GM12878 (cell line): ENCODE measurements at regions of chr3 and their contacts with region 1.

Region 1: DNA sequence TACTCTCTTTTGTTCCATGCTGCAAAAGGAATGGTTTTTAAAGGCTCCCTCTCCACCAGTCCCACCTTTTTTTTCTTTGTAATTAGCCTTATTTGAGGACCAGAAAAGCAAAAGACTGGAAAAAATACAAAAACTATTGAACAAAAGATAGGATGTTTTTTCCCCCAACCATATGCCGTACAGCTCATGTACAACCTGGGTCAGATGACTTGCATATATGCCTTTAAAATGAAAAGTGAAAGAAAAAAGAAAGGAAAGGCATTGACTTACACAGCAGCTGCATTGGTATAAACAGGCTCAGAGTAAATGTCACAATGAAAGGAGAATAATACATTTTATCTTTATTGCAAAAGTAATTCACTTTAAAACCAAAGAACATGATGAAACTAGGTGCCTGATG is 69.5 kb upstream of the CMC1 start:
- DNase-seq: no peak
- ATAC-seq: peak; percentile 96
- H3K4me3 ChIP-seq: no peak overlapping the region
- H3K27ac ChIP-seq: no peak overlapping the region
- H3K4me1 ChIP-seq: no peaks in the 10 kb centered on the region
- H3K27me3 ChIP-seq: no peaks in the 10 kb centered on the region
- CTCF ChIP-seq: no peak
- EP300 ChIP-seq: 0 out of 4 replicates have a peak, but pooled peaks of 1 of the 2 experiments have one; percentile 15
- POLR2A ChIP-seq: no peak
- RAD21 ChIP-seq: no peak

Region 2: GRCh38 chr3:28008235-28008634 is 163.7 kb before region 1 on chr3:
- CTCF ChIA-PET with region 1: no interaction called
- POLR2A ChIA-PET with region 1: no interaction called
- RAD21 ChIA-PET with region 1: no interaction called
- SMC1A ChIA-PET with region 1: no interaction called
- in situ Hi-C with region 1: no loop called
- intact Hi-C with region 1: no loop called
- DNase-seq: no peak
- ATAC-seq: peak; percentile 79
- H3K4me3 ChIP-seq: no peak overlapping the region
- H3K27ac ChIP-seq: no peak overlapping the region
- H3K4me1 ChIP-seq: no peaks in the 10 kb centered on the region
- H3K27me3 ChIP-seq: no peaks in the 10 kb centered on the region
- CTCF ChIP-seq: no peak; a peak in 1 of 6 replicates
- EP300 ChIP-seq: peak in 1 of 2 experiments; percentile 22; a peak in 1 of 4 replicates
- POLR2A ChIP-seq: no peak
- RAD21 ChIP-seq: no peak

Region 3: GRCh38 chr3:28151608-28152228 is 20.2 kb before region 1 on chr3:
- CTCF ChIA-PET with region 1: interaction called, 3 read pairs
- POLR2A ChIA-PET with region 1: no interaction called
- RAD21 ChIA-PET with region 1: interaction called, 4 read pairs
- SMC1A ChIA-PET with region 1: interaction called, 10 read pairs
- in situ Hi-C with region 1: no loop called
- intact Hi-C with region 1: no loop called
- DNase-seq: peak; percentile 33
- ATAC-seq: peak; percentile 95
- H3K4me3 ChIP-seq: no peak overlapping the region
- H3K27ac ChIP-seq: no peak overlapping the region
- H3K4me1 ChIP-seq: no peaks in the 10 kb centered on the region
- H3K27me3 ChIP-seq: no peaks in the 10 kb centered on the region
- CTCF ChIP-seq: no peak
- EP300 ChIP-seq: no peak
- POLR2A ChIP-seq: no peak
- RAD21 ChIP-seq: no peak